ENCODE measurements at regions of chr1 and their contacts with region 1.

Region 1: DNA sequence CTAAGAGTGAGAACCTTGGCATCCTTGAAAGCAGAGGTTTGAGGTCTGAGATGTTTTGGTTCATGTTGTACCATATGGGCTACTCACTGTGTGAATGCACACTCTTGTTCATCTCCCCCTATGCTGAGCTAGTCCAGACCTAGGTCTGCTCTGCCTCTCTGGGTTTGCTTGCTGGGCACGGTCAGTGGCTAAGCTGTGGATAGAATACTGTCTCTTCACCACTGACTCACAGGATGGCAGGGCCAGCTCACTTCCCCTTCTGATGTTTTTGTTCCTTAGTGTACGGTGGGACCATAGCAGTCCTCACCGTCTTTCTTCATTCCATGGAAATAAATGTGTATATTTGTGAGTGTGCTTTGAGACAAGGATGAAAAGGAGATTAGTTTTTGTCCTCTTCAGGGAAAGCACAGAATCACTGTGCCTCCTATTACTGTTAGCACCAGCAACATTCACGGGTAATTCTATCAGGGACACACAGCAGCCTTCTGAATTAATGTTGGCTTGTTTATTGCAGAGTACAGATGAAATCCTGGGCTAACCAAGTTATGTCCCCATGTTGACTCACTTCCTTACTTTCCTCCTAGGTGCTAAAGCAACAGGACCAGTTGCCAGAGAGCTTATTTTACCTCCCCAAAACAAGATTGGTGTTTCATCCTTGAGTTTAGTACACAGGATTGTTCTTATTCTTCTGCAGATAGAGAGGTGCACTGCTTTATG is 56.9 kb upstream of the IVNS1ABP start:
- DNase-seq: no peak
- ATAC-seq: peak; percentile 62
- H3K4me3 Mint-ChIP-seq: no peak overlapping the region
- H3K27ac Mint-ChIP-seq: peak overlapping the region; percentile 36
- H3K4me1 Mint-ChIP-seq: peaks cover 17% of the 10 kb centered on the region
- H3K27me3 Mint-ChIP-seq: no peaks in the 10 kb centered on the region
- CTCF ChIP-seq: no peak

Region 2: GRCh38 chr1:185325413-185325812 is 48.6 kb before region 1 on chr1:
- CTCF ChIA-PET with region 1: no interaction called
- POLR2A ChIA-PET with region 1: no interaction called
- intact Hi-C with region 1: no loop called
- DNase-seq: no peak
- ATAC-seq: no peak
- H3K4me3 Mint-ChIP-seq: no peak overlapping the region
- H3K27ac Mint-ChIP-seq: no peak overlapping the region
- H3K4me1 Mint-ChIP-seq: peaks cover 5% of the 10 kb centered on the region
- H3K27me3 Mint-ChIP-seq: no peaks in the 10 kb centered on the region
- CTCF ChIP-seq: no peak

Region 3: GRCh38 chr1:185412385-185413083 is 38.6 kb after region 1 on chr1:
- CTCF ChIA-PET with region 1: no interaction called
- POLR2A ChIA-PET with region 1: no interaction called
- intact Hi-C with region 1: loop called (anchors 2 kb)
- DNase-seq: peak; percentile 3
- ATAC-seq: peak; percentile 34
- H3K4me3 Mint-ChIP-seq: no peak overlapping the region
- H3K27ac Mint-ChIP-seq: no peak overlapping the region
- H3K4me1 Mint-ChIP-seq: peaks cover 11% of the 10 kb centered on the region
- H3K27me3 Mint-ChIP-seq: no peaks in the 10 kb centered on the region
- CTCF ChIP-seq: no peak